ENCODE measurements at regions of chr9 and their contacts with region 1.

Region 1: GRCh38 chr9:113056191-113057106 is at the start of gene ZFP37:
- DNase-seq: peak; percentile 85 to 97 (median 94)
- H3K4me3 ChIP-seq: peak within 1 kb of the TSS; percentile 47 to 96 (median 80)
- H3K27ac ChIP-seq: peak within 1 kb of the TSS in 58 of 59 donors; percentile 28 to 96 (median 82)
- H3K27me3 ChIP-seq: peaks cover 0 to 28% (median 12%) of the 10 kb centered on the region in 45 donors
- CTCF ChIP-seq: peak in 48 of 56 donors; percentile 14 to 67 (median 38)
- total RNA-seq, gene ZFP37: 4.6 to 12.8 (median 7.1) TPM

Region 2: DNA sequence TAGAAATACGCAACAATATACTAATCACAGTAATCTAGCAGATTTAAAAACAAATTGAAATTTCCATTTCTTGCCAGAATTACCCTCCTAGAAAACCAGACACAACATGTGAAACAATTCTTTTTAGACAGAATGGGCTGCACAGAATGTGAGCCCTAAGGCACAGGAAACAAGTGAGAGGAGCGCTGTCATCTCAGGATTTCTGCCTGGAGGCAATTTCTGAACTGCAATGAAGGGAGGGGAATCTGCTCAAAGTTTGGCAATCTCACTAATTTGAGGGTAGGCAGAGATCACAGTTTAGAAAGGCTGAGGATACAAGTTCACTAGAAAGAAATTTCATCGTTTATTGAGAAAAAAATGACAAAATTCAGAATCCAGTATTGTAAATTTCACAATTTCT is 408.9 kb before region 1 on chr9:
- intact Hi-C with region 1: no loop called
- DNase-seq: no peak
- H3K4me3 ChIP-seq: no peak overlapping the region
- H3K27ac ChIP-seq: no peak overlapping the region
- H3K27me3 ChIP-seq: no peaks in the 10 kb centered on the region
- CTCF ChIP-seq: no peak

Region 3: GRCh38 chr9:113261917-113262671 is 205.6 kb after region 1 on chr9:
- intact Hi-C with region 1: no loop called
- DNase-seq: no peak
- H3K4me3 ChIP-seq: no peak overlapping the region
- H3K27ac ChIP-seq: no peak overlapping the region
- H3K27me3 ChIP-seq: no peaks in the 10 kb centered on the region
- CTCF ChIP-seq: no peak

Region 4: DNA sequence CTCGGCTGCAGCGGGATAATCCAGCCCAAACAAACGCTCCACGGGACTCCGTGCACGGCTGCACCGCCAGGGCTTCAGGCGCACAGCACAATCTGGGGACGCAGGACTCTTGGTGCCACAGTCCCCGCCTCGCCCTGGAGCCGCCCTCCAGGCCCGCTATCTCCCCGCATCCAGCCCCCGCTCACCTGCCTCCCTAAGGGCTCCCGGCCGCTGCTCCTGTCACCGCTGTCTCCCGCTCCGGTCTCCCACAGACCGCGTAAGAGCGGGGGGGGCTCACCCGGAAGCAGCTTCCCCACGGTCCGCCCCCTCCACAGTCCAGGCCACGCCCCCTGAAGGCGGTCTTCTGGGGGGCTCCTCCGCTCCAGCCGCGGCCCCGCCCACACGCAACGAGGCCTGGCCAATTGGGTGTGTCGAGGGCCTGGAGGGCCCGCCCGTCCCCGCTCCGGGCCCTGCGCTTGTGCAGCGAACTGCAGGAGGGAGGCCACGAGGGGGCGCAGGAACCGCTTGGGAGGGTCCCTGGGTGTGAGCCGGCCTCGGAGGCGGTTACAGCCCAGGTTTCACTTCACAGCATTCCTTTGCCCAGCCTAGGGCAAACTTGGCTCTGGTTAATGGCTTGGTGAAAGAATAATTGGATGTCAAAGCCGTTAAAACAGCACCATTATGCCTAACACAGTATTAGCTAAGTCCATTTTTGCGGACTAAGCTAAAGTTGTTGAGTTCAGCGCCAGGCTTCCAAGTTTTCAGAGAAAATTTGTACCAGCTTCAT is 344.8 kb after region 1 on chr9 and contains the start of gene ALAD:
- intact Hi-C with region 1: loop called in 1 of 2 experiments (anchors 10 kb)
- DNase-seq: peak; percentile 94 to 100 (median 98)
- H3K4me3 ChIP-seq: peak within 1 kb of the TSS; percentile 68 to 99 (median 91)
- H3K27ac ChIP-seq: peak within 1 kb of the TSS; percentile 36 to 97 (median 89)
- H3K27me3 ChIP-seq: no peaks in the 10 kb centered on the region
- CTCF ChIP-seq: peak; percentile 70 to 99 (median 96)
- total RNA-seq, gene ALAD: 67.7 to 134 (median 89.4) TPM

Region 5: DNA sequence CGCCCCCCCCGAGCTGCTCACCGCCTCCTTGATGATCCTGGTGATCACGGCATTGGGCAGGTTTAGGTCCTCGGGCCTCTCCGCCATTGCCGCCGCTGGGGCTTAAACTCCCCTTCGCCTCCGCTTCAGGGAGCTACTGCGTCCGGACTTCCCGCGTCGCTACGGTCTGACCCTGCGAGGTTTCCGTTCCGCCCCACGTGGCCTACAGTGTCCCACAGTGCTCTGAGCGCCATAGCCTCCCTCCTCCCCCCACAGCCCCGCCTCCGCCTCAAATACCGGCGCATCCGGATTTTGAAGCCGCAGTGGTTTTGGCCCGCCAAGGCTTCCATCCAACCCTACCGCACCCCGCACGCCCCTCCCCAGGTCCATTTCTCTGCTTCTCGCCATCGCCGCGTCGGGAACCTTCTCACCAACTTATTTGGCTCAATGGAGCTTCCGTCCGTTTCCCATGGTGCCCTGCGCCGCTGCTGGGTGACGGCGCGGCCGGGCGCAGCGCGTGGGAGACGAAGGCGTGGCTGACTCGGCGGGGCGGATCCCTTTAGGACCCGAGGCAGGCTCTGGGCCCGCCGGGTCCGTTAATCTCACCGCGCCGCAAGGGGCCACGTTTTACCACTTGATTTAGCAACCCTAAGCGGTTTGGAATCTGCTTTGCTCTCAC is 353.9 kb after region 1 on chr9 and contains the starts of genes C9orf43 and POLE3:
- intact Hi-C with region 1: loop called (anchors 10 kb)
- DNase-seq: peak; percentile 91 to 94 (median 92)
- H3K4me3 ChIP-seq: peak within 1 kb of the TSS; percentile 61 to 100 (median 91)
- H3K27ac ChIP-seq: peak within 1 kb of the TSS; percentile 92 to 100 (median 99)
- H3K27me3 ChIP-seq: no peaks in the 10 kb centered on the region
- CTCF ChIP-seq: peak in 31 of 56 donors; percentile 2 to 61 (median 20)
- total RNA-seq, gene C9orf43: 0.41 to 2.5 (median 1.2) TPM
- total RNA-seq, gene POLE3: 18.6 to 38.2 (median 27.0) TPM

Measured in dorsolateral prefrontal cortex (tissue), 120 donors.